Esophagus muscularis mucosa (tissue), 4 donors: ENCODE measurements at regions of chr1 and their contacts with region 1.

Region 1: DNA sequence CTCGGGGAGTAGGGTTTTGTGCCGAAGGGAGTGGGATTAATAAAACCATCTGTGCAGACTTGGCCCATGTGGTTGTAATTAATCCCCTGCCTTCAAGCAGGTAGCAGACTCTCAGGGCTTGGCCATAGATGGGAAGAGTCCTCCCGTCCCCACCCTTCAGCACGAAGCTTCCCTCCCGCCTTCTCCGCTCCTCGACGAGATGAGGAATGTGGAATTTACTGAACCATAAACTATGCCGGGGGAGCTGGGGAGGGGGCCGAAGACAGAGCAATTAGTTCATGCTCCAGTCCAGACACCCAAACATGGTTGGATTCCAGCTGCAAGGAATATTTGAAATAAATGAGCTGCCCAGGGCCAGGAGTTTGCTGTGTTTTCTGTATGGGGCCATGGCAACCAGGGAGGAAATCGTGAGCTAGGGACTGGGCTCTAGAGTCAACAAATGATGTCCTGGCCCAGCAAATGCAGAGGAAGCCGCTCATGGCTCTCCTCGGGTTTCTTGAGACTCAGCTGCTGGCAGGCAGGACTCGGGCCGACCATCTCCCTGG is 78.8 kb downstream of the SPSB1 start:
- DNase-seq: peak; percentile 96
- H3K4me3 ChIP-seq: no peak overlapping the region
- H3K27ac ChIP-seq: peak overlapping the region; percentile 91 to 95 (median 95)
- H3K4me1 ChIP-seq: peaks cover 35 to 99% (median 92%) of the 10 kb centered on the region in 4 donors
- H3K27me3 ChIP-seq: no peaks in the 10 kb centered on the region
- CTCF ChIP-seq: no peak
- EP300 ChIP-seq: peak; percentile 73
- POLR2A ChIP-seq: no peak

Region 2: GRCh38 chr1:9302745-9303524 is 68.5 kb before region 1 on chr1:
- intact Hi-C with region 1: loop called (anchors 5 kb)
- DNase-seq: no peak
- H3K4me3 ChIP-seq: peak overlapping the region in 2 of 4 donors; percentile 4 to 21
- H3K27ac ChIP-seq: peak overlapping the region; percentile 78 to 85 (median 81)
- H3K4me1 ChIP-seq: peaks cover 47 to 99% (median 97%) of the 10 kb centered on the region in 4 donors
- H3K27me3 ChIP-seq: no peaks in the 10 kb centered on the region
- CTCF ChIP-seq: no peak
- EP300 ChIP-seq: peak; percentile 34
- POLR2A ChIP-seq: no peak

Region 3: DNA sequence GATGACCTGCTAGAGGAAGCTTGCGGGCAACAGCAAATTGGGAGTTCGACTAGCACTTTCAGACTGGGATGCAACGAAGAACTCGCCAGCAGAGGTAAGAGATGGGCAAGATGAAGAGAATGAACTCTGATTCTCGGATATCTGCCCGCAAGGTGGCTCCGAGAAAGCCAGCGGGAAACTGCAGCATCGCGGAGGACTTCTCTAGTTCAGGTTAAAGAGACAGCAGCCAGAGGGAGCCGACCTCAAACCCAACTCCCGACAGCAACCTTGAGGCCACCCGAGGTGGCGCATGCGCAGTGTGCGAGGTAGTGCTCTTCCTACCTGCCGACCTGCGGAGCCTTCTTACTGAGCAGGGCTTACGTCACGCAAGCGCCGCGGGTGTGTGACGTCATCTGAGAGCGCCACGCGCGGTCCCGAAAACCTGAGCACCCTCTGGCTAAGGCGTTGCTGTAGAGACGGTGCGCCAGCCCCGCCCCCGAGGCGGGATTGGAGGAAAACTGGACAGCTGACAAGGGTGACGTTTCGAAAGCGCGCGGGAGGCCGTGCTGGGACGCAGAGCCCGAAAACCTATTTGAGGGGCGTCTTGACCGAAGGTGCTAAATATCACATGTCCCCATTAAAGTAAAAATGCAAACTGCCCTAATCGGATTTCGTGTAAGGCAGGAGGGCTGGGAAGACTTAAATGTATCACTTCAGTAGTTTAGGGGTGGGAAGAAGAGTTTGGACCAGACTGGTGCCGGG is 57.3 kb after region 1 on chr1:
- intact Hi-C with region 1: no loop called
- DNase-seq: peak; percentile 100
- H3K4me3 ChIP-seq: peak overlapping the region; percentile 55 to 66 (median 62)
- H3K27ac ChIP-seq: peak overlapping the region; percentile 83 to 91 (median 89)
- H3K4me1 ChIP-seq: peaks cover 6 to 16% (median 14%) of the 10 kb centered on the region in 4 donors
- H3K27me3 ChIP-seq: no peaks in the 10 kb centered on the region
- CTCF ChIP-seq: peak; percentile 10 to 44 (median 12)
- EP300 ChIP-seq: no peak
- POLR2A ChIP-seq: no peak

Region 4: GRCh38 chr1:9441451-9442133 is 70.1 kb after region 1 on chr1:
- intact Hi-C with region 1: loop called (anchors 10 kb)
- DNase-seq: no peak
- H3K4me3 ChIP-seq: no peak overlapping the region
- H3K27ac ChIP-seq: peak overlapping the region; percentile 74 to 85 (median 78)
- H3K4me1 ChIP-seq: peaks cover 36 to 71% (median 61%) of the 10 kb centered on the region in 4 donors
- H3K27me3 ChIP-seq: no peaks in the 10 kb centered on the region
- CTCF ChIP-seq: no peak
- EP300 ChIP-seq: no peak
- POLR2A ChIP-seq: no peak

Region 5: GRCh38 chr1:9466780-9467758 is 95.6 kb after region 1 on chr1:
- intact Hi-C with region 1: loop called (anchors 5 kb)
- DNase-seq: no peak
- H3K4me3 ChIP-seq: peak overlapping the region; percentile 17 to 33 (median 30)
- H3K27ac ChIP-seq: peak overlapping the region; percentile 87 to 93 (median 88)
- H3K4me1 ChIP-seq: peaks cover 7 to 42% (median 34%) of the 10 kb centered on the region in 4 donors
- H3K27me3 ChIP-seq: no peaks in the 10 kb centered on the region
- CTCF ChIP-seq: no peak
- EP300 ChIP-seq: peak; percentile 65
- POLR2A ChIP-seq: no peak